ENCODE measurements at regions of chr19 and their contacts with region 1.

Region 1: GRCh38 chr19:19404879-19405860 is at the start of gene GATAD2A:
- DNase-seq: peak; percentile 91
- H3K4me3 Mint-ChIP-seq: peak within 1 kb of the TSS; percentile 91
- H3K27ac Mint-ChIP-seq: peak within 1 kb of the TSS; percentile 88
- H3K4me1 Mint-ChIP-seq: peaks cover 64% of the 10 kb centered on the region
- H3K27me3 Mint-ChIP-seq: no peaks in the 10 kb centered on the region
- total RNA-seq, gene GATAD2A: 109 to 113 TPM

Region 2: GRCh38 chr19:19305696-19306095 is 99.5 kb before region 1 on chr19:
- CTCF ChIA-PET with region 1: no interaction called
- POLR2A ChIA-PET with region 1: no interaction called
- DNase-seq: no peak
- H3K4me3 Mint-ChIP-seq: no peak overlapping the region
- H3K27ac Mint-ChIP-seq: no peak overlapping the region
- H3K4me1 Mint-ChIP-seq: no peaks in the 10 kb centered on the region
- H3K27me3 Mint-ChIP-seq: no peaks in the 10 kb centered on the region

Region 3: DNA sequence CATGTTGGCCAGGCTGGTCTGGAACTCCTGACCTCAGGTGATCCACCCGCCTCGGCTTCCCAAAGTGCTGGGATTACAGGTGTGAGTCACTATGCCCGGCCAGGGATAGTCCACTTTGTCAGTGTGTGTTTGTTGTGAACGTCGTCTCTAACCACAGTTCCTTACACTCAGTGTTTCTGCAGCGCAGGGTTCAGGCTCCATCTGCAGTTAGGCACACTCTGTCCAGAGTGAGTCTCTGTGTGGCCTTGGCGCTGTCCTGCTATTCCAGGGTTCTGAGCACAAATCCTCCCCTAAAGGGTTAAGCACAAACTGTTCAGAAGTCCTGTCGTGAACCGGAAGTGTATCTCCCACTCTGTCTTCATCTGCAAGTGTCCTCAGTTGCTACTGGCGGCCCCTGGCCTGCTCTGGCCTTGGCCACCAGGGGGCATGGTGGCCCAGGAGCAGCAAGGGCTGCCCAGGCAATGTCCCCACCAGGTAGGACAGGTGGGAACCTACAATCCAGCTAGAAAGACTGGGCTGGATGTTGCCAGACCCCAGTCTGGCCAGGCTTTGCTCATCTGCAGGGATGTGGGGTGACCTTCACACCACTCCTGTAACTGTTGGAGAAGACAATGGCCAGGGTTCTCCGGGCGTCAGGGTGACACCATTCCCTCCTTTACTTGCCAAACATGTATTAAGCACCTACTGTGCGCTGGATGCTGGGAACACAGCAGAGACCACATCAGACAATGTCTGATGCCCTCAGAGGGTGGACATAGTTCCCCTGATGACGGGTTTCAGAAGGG is 38.4 kb before region 1 on chr19:
- CTCF ChIA-PET with region 1: interaction called, 33 read pairs
- POLR2A ChIA-PET with region 1: interaction called, 24 read pairs
- DNase-seq: peak; percentile 81
- H3K4me3 Mint-ChIP-seq: peak overlapping the region; percentile 17
- H3K27ac Mint-ChIP-seq: peak overlapping the region; percentile 61
- H3K4me1 Mint-ChIP-seq: peaks cover 19% of the 10 kb centered on the region
- H3K27me3 Mint-ChIP-seq: no peaks in the 10 kb centered on the region

Region 4: GRCh38 chr19:19385108-19385899 is 19.9 kb before region 1 on chr19:
- CTCF ChIA-PET with region 1: interaction called, 5 read pairs
- POLR2A ChIA-PET with region 1: interaction called, 15 read pairs
- DNase-seq: peak; percentile 100
- H3K4me3 Mint-ChIP-seq: peak overlapping the region; percentile 87
- H3K27ac Mint-ChIP-seq: peak overlapping the region; percentile 91
- H3K4me1 Mint-ChIP-seq: peaks cover 46% of the 10 kb centered on the region
- H3K27me3 Mint-ChIP-seq: no peaks in the 10 kb centered on the region